MCF 10A (cell line): ENCODE measurements at regions of chr4 and their contacts with region 1.

Region 1: GRCh38 chr4:151117371-151117962 is 18.0 kb downstream of the RPS3A start:
- DNase-seq: peak; percentile 68
- H3K4me3 Mint-ChIP-seq: no peak overlapping the region
- H3K27ac Mint-ChIP-seq: no peak overlapping the region
- H3K4me1 Mint-ChIP-seq: no peaks in the 10 kb centered on the region
- H3K27me3 Mint-ChIP-seq: no peaks in the 10 kb centered on the region
- CTCF ChIP-seq: peak; percentile 78

Region 2: GRCh38 chr4:151067316-151067970 is 50.0 kb before region 1 on chr4:
- CTCF ChIA-PET with region 1: no interaction called
- POLR2A ChIA-PET with region 1: no interaction called
- intact Hi-C with region 1: no loop called
- DNase-seq: no peak
- H3K4me3 Mint-ChIP-seq: no peak overlapping the region
- H3K27ac Mint-ChIP-seq: no peak overlapping the region
- H3K4me1 Mint-ChIP-seq: no peaks in the 10 kb centered on the region
- H3K27me3 Mint-ChIP-seq: no peaks in the 10 kb centered on the region
- CTCF ChIP-seq: no peak

Region 3: GRCh38 chr4:151099229-151099975 is 18.1 kb before region 1 on chr4 and contains the start of gene RPS3A:
- CTCF ChIA-PET with region 1: interaction called, 9 read pairs
- POLR2A ChIA-PET with region 1: interaction called, 44 read pairs
- intact Hi-C with region 1: no loop called
- DNase-seq: peak; percentile 98
- H3K4me3 Mint-ChIP-seq: peak within 1 kb of the TSS; percentile 91
- H3K27ac Mint-ChIP-seq: peak within 1 kb of the TSS; percentile 100
- H3K4me1 Mint-ChIP-seq: peaks cover 10% of the 10 kb centered on the region
- H3K27me3 Mint-ChIP-seq: no peaks in the 10 kb centered on the region
- CTCF ChIP-seq: peak; percentile 78
- total RNA-seq, gene RPS3A: 2,661 and 2,955 TPM in 2 replicates

Region 4: DNA sequence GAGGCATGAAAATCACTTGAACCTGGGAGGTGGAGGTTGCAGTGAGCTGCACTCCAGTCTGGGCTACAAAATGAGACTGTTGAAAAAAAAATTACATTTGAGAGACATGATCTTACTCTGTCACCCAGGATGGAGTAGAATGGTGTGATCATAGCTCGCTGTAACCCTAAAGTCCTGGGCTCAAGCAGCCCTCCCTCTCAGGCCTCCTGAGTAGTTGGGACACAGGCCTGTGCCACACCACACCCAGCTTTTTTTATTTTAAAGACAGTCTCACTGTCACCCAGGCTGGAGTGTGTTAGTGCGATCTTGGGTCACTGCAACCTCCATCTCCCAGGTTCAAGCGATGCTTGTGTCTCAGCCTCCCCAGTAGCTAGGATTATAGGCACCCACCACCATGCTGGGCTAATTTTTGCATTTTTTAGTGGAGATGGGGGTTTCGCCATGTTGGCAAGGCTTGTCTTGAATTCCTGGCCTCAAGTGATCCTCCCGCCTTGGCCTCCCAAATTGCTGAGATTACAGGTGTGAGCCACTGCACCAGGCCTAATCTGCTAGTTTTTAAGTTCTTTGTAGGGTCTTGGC is 11.9 kb before region 1 on chr4:
- CTCF ChIA-PET with region 1: interaction called, 9 read pairs
- POLR2A ChIA-PET with region 1: interaction called, 44 read pairs
- intact Hi-C with region 1: no loop called
- DNase-seq: no peak
- H3K4me3 Mint-ChIP-seq: no peak overlapping the region
- H3K27ac Mint-ChIP-seq: no peak overlapping the region
- H3K4me1 Mint-ChIP-seq: peaks cover 10% of the 10 kb centered on the region
- H3K27me3 Mint-ChIP-seq: no peaks in the 10 kb centered on the region
- CTCF ChIP-seq: no peak

Region 5: DNA sequence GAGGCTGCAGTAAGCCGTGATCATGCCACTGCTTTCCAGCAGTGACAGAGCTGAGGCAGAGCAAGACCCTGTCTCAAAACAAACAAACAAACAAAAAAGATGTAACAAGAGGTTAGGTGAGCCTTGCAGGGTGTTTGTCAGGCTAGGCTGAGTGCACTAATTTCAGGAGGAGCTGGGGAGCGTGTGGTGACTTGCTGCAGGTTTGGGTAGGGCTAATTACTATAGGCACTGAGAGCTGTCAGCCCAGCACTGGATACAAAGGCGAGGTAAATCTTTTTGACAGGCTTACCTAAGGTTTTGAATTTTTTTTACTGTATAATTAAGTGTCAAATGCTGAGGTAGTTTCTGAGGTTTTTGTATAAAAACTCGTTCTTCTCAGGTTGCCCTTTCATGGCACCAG is 237.7 kb after region 1 on chr4:
- CTCF ChIA-PET with region 1: interaction called, 11 read pairs
- POLR2A ChIA-PET with region 1: interaction called, 4 read pairs
- intact Hi-C with region 1: no loop called
- DNase-seq: peak; percentile 28
- H3K4me3 Mint-ChIP-seq: no peak overlapping the region
- H3K27ac Mint-ChIP-seq: no peak overlapping the region
- H3K4me1 Mint-ChIP-seq: peaks cover 6% of the 10 kb centered on the region
- H3K27me3 Mint-ChIP-seq: no peaks in the 10 kb centered on the region
- CTCF ChIP-seq: no peak

Region 6: DNA sequence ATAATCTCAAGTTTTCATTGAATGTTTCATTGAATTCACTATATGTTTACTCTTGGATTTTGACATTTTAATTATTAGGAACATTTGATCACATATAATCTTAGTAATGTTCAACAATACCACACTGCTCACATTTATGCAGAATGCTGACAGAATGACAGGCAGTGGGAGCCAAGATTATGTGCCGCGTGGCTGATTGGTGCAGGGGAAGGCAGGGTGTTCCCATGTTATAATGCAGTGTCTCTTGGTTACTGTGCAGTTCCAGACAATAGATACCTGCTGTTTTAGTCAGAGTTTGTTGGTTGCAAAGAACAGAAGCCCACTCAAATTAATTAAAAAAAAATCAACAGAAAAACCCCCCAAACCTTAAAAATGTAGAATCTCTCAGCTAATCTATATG is 324.5 kb after region 1 on chr4:
- CTCF ChIA-PET with region 1: no interaction called
- POLR2A ChIA-PET with region 1: no interaction called
- intact Hi-C with region 1: no loop called
- DNase-seq: no peak
- H3K4me3 Mint-ChIP-seq: no peak overlapping the region
- H3K27ac Mint-ChIP-seq: no peak overlapping the region
- H3K4me1 Mint-ChIP-seq: no peaks in the 10 kb centered on the region
- H3K27me3 Mint-ChIP-seq: no peaks in the 10 kb centered on the region
- CTCF ChIP-seq: no peak

Region 7: GRCh38 chr4:151604238-151604637 is 486.8 kb after region 1 on chr4:
- CTCF ChIA-PET with region 1: interaction called, 3 read pairs
- POLR2A ChIA-PET with region 1: no interaction called
- intact Hi-C with region 1: loop called (anchors 1 kb)
- DNase-seq: peak; percentile 29
- H3K4me3 Mint-ChIP-seq: no peak overlapping the region
- H3K27ac Mint-ChIP-seq: no peak overlapping the region
- H3K4me1 Mint-ChIP-seq: no peaks in the 10 kb centered on the region
- H3K27me3 Mint-ChIP-seq: no peaks in the 10 kb centered on the region
- CTCF ChIP-seq: peak; percentile 58

Region 8: DNA sequence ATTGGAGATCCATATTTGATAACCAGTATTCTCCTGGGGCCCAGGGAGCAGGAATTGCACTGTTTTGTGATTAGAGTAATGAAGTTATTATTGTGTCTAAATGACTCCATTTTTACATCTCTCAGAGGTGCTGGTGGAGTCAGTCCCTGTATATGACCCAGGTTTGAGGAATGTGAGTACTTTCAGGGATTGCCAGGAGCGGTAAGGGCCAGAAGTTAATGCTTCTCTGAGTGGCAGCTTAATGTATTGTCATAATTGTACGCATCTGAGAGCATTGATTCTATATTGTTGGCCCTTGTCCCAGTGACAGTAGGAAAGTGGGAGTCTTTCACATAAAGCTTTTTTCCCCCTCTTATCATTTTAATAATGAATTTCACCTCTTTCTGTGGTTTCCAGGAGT is 497.1 kb after region 1 on chr4:
- CTCF ChIA-PET with region 1: interaction called, 5 read pairs
- POLR2A ChIA-PET with region 1: no interaction called
- intact Hi-C with region 1: loop called (anchors 1 kb)
- DNase-seq: no peak
- H3K4me3 Mint-ChIP-seq: no peak overlapping the region
- H3K27ac Mint-ChIP-seq: no peak overlapping the region
- H3K4me1 Mint-ChIP-seq: no peaks in the 10 kb centered on the region
- H3K27me3 Mint-ChIP-seq: no peaks in the 10 kb centered on the region
- CTCF ChIP-seq: no peak